ENCODE measurements at regions of chr19 and their contacts with region 1.

Region 1: GRCh38 chr19:35592226-35592625 is 6.3 kb downstream of the PMIS2 start:
- DNase-seq: peak; percentile 25
- ATAC-seq: no peak; the same call in 1 of the 2 replicates
- H3K4me3 ChIP-seq: no peak overlapping the region
- H3K27ac ChIP-seq: no peak overlapping the region
- H3K4me1 ChIP-seq: no peaks in the 10 kb centered on the region
- H3K27me3 ChIP-seq: no peaks in the 10 kb centered on the region
- CTCF ChIP-seq: peak; percentile 83; the same call in 1 of the 2 replicates

Region 2: DNA sequence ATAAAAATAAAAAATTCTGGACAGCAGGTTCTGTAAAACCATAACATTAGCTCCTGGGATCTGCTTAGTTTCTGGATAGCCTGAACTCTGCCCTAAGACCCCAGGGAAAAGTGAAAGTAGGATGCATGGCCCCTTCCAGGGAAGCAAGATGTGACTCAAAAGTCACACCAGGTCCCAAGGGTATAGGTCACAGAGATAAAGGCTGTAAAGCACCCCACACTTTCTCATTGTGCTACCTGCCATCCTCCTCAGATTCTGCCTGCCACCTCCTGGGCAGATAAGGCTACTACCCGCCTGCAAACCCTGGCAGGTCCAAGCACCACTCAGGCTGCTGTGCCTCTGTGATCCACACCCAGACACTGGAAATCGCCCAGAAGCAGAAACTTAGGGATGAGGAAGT is 123.6 kb before region 1 on chr19:
- CTCF ChIA-PET with region 1: interaction called, 15 read pairs
- POLR2A ChIA-PET with region 1: no interaction called
- in situ Hi-C with region 1: no loop called
- intact Hi-C with region 1: no loop called
- DNase-seq: peak; percentile 54
- ATAC-seq: peak; percentile 99
- H3K4me3 ChIP-seq: no peak overlapping the region
- H3K27ac ChIP-seq: no peak overlapping the region
- H3K4me1 ChIP-seq: no peaks in the 10 kb centered on the region
- H3K27me3 ChIP-seq: peaks cover 8% of the 10 kb centered on the region; the same call in 1 of the 2 replicates
- CTCF ChIP-seq: peak; percentile 84